ENCODE measurements at regions of chr17 and their contacts with region 1.

Region 1: GRCh38 chr17:11144358-11145233 is 96.4 kb upstream of the SHISA6 start:
- DNase-seq: peak in 7 of 10 donors; percentile 20 to 79 (median 41)

Region 2: GRCh38 chr17:10729334-10730193 is 415.0 kb before region 1 on chr17 and contains the start of gene TMEM220:
- intact Hi-C with region 1: loop called (anchors 10 kb)
- DNase-seq: peak; percentile 33 to 93 (median 60)

Measured in posterior cingulate gyrus (tissue), 11 donors.